ENCODE measurements at regions of chr15 and their contacts with region 1.

Region 1: DNA sequence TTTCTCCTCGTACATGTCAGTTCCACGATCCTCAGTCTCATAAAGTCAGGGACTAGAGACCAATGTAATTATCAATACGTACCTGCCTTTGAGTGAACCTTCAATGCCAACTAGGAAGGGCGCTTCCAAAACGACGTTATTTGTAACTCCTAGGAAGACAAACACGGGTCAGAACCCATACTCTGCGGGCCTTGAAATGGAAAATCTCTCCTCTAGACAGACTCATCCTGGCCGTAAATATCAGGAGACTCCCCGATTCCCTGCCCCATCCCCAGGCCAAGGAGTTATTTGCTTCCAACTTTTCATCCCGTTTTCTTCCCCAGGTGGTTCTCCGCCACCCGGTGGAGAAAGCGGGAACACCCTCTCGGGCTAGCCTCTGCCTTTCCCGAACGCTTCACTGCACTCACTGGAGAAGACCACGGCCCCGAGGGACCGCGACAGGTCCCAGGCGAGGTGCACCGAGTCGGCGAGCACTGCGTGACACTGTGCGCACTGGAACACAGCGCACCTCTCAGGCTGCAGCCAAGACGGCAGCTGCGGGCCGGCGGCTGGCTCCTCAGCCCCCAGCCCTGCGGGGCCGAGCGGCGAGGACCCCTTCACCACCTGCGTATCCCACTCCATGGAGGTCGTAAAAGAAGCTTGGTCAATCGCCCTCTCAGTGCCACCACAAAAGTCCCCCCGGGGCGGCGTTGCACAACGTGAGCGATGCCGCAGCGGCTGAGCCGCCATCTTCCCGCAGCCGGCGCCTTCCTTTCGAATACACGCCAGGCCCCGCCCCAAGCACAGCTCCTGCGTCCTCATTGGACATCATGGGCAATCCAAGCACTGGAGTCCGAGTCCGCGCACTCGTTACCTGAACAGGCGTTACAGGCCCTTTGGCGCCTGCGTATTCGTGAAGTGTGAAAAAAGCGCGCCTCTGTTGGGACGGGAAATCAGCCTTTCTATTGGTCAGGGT is at the start of gene OIP5:
- DNase-seq: peak; percentile 100
- H3K4me3 Mint-ChIP-seq: peak within 1 kb of the TSS; percentile 98
- H3K27ac Mint-ChIP-seq: peak within 1 kb of the TSS; percentile 93
- H3K4me1 Mint-ChIP-seq: peaks cover 5% of the 10 kb centered on the region
- H3K27me3 Mint-ChIP-seq: no peaks in the 10 kb centered on the region
- CTCF ChIP-seq: peak; percentile 65
- total RNA-seq, gene OIP5: 2.9 and 5.7 TPM in 2 replicates

Region 2: GRCh38 chr15:40952901-40953712 is 379.0 kb before region 1 on chr15 and contains the start of gene CHAC1:
- CTCF ChIA-PET with region 1: no interaction called
- POLR2A ChIA-PET with region 1: no interaction called
- intact Hi-C with region 1: loop called (anchors 5 kb)
- DNase-seq: peak; percentile 98
- H3K4me3 Mint-ChIP-seq: peak within 1 kb of the TSS; percentile 87
- H3K27ac Mint-ChIP-seq: peak within 1 kb of the TSS; percentile 83
- H3K4me1 Mint-ChIP-seq: peaks cover 25% of the 10 kb centered on the region
- H3K27me3 Mint-ChIP-seq: no peaks in the 10 kb centered on the region
- CTCF ChIP-seq: no peak
- total RNA-seq, gene CHAC1: 35.5 and 49.4 TPM in 2 replicates

Region 3: DNA sequence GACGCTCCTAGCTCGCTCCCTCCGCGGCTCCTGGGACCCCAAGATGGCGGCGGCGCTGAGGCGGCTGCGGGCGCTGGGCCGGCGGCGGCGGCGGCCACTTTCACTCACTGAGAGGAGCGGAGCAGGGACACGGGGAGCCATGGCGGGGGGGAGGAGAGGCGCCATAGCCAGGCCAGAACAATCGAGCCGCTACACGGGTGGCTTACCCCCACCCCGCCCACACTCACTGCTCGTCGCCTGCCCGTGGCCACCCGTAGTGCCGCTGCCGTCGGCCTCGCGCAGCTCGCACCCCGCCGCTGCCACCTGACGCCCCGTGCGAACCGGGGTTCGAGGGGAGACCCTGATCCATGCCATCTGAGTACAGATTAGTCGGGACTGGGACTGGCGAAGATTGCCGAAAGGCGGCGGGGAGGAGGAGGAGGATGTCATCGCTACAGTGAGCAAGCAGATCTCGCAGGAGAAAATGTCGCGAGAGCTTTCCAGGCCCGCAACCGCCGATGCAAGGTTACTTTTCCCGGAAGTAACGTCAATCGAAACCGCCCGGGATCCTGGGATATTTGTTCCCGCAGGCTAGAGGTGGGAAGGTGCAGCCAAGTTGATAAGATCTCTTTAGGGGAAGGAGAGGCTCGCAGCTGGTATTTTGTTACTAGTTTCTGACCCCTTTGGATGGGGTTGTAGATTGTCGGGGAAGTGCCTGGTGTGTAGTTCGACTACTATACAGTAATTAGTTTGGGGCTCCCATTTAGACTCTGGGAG is 215.8 kb before region 1 on chr15 and contains the start of gene INO80:
- CTCF ChIA-PET with region 1: no interaction called
- POLR2A ChIA-PET with region 1: interaction called, 7 read pairs
- intact Hi-C with region 1: loop called (anchors 10 kb)
- DNase-seq: peak; percentile 99
- H3K4me3 Mint-ChIP-seq: peak within 1 kb of the TSS; percentile 88
- H3K27ac Mint-ChIP-seq: peak within 1 kb of the TSS; percentile 99
- H3K4me1 Mint-ChIP-seq: no peaks in the 10 kb centered on the region
- H3K27me3 Mint-ChIP-seq: no peaks in the 10 kb centered on the region
- CTCF ChIP-seq: no peak
- total RNA-seq, gene INO80: 32.3 and 33.8 TPM in 2 replicates

Region 4: GRCh38 chr15:41283653-41284426 is 48.3 kb before region 1 on chr15:
- CTCF ChIA-PET with region 1: interaction called, 5 read pairs
- POLR2A ChIA-PET with region 1: interaction called, 27 read pairs
- intact Hi-C with region 1: loop called (anchors 1 kb)
- DNase-seq: peak; percentile 99
- H3K4me3 Mint-ChIP-seq: peak overlapping the region; percentile 95
- H3K27ac Mint-ChIP-seq: peak overlapping the region; percentile 95
- H3K4me1 Mint-ChIP-seq: peaks cover 28% of the 10 kb centered on the region
- H3K27me3 Mint-ChIP-seq: no peaks in the 10 kb centered on the region
- CTCF ChIP-seq: no peak

Region 5: DNA sequence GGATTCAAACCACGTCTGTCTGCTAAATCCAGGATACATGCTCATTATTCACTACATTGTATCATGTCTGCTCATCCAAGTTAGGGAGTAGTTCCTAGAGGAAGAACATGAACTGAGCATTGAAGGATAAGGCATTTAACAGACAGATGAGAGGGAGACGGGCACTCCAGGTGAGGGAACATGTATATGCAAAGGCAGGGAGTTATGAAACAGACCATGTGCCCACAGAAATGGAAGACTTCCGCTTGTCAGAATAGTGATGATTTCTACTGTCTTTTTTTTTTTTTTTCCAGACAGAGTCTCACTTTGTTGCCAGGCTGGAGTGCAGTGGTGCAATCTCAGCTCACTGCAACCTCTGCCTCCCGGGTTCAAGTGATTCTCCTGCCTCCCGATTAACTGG is 75.2 kb after region 1 on chr15:
- CTCF ChIA-PET with region 1: interaction called, 7 read pairs
- POLR2A ChIA-PET with region 1: interaction called, 17 read pairs
- intact Hi-C with region 1: no loop called
- DNase-seq: no peak
- H3K4me3 Mint-ChIP-seq: no peak overlapping the region
- H3K27ac Mint-ChIP-seq: no peak overlapping the region
- H3K4me1 Mint-ChIP-seq: peaks cover 21% of the 10 kb centered on the region
- H3K27me3 Mint-ChIP-seq: no peaks in the 10 kb centered on the region
- CTCF ChIP-seq: no peak

Region 6: DNA sequence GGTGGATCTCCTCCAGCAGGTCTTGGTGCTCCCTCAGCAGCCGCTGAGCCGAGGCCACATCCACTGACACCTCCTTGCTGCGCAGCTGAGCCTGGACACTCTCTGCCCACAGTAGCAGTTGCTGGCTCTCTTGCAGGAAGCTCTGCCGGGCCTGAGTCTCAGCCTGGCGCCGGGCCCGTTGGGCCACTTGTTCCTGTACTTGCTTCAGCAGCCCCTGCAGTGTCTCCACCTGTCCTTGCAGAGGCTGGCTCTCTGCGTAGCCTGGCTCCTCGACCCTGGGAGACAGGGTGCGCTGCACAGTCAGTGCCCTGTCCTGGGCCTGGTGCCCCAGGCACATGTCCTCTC is 546.2 kb after region 1 on chr15:
- CTCF ChIA-PET with region 1: no interaction called
- POLR2A ChIA-PET with region 1: no interaction called
- intact Hi-C with region 1: no loop called
- DNase-seq: no peak
- H3K4me3 Mint-ChIP-seq: no peak overlapping the region
- H3K27ac Mint-ChIP-seq: no peak overlapping the region
- H3K4me1 Mint-ChIP-seq: no peaks in the 10 kb centered on the region
- H3K27me3 Mint-ChIP-seq: no peaks in the 10 kb centered on the region
- CTCF ChIP-seq: no peak

Measured in MCF 10A (cell line).